Caco-2 (cell line): ENCODE measurements at regions of chr2 and their contacts with region 1.

Region 1: DNA sequence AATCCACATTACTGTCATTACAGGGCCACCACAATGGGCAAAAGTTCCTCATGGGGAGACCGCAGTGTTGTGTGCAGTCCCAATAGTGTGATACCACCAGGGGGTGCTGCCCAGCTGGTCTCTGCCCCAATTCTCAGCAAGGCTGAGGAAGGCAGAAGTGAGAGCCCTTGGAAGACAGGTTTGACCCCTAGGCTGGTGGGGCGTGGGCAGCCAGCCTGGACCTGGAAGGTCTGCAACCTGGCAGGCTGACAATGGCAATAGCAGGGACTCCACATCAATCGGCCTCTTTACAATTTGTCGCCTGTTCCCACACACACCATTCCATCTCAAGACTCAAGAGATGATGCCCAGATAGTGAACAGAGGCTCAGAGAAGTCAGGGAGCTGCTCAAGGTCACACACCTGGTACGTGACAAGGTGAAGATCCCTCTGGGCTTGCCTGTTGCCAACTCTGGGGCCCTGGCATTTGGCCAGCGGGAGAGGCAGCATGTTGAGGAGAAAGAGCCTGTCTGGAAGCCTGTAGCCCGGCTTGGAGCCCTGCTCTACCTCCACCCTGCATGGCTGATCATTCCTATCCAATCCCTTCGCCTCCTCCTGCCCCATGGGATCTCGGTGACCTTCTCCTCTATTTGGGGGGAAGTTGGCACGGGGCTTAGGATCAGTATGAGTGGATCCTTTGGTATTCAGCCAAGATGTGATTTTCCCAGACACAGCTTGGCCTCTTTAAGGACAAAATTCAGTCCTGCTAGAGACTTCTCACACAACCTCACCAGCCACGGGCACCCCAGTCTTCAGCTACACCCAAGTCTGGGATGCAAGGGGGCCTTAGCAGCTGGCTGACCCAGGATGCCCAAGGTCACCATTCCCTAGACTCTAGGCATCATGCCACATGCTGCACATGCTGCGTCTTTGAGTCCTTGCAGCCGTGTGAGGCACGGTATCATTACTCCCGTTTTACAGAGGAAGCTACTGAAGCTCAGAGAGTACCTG is 2.9 kb upstream of the ATOH8 start:
- DNase-seq: peak; percentile 69 to 81
- H3K4me3 ChIP-seq: no peak overlapping the region
- H3K4me3 Mint-ChIP-seq: no peak overlapping the region
- H3K27ac Mint-ChIP-seq: no peak overlapping the region
- H3K4me1 ChIP-seq: peaks cover 11% of the 10 kb centered on the region
- H3K4me1 Mint-ChIP-seq: peaks cover 9% of the 10 kb centered on the region
- H3K27me3 ChIP-seq: peaks cover 6% of the 10 kb centered on the region
- H3K27me3 Mint-ChIP-seq: peaks cover 23% of the 10 kb centered on the region
- CTCF ChIP-seq: peak; percentile 85 to 91

Region 2: DNA sequence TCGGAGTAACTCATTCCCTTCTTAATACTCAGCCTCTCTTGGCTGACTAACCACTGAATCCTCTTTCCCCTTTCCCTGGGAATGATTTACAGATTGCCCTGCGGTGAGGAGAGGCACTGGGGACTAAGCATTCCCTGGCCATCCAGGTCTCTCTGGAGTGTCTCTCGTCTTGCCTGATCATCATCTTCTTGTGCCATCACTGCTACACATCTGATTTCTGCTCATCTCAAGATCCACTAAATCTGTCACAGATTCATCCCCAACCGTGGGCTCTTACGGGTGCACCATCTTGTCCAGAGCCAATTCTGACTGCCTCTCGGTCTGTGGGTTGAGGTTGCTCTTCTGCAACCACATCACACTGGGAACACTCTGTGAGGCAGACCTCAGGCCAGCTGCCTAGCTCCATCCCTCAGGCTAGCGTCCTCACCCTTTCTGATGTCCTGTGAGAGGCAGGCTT is 94.9 kb before region 1 on chr2:
- CTCF ChIA-PET with region 1: no interaction called
- POLR2A ChIA-PET with region 1: no interaction called
- intact Hi-C with region 1: no loop called
- DNase-seq: no peak
- H3K4me3 ChIP-seq: no peak overlapping the region
- H3K4me3 Mint-ChIP-seq: no peak overlapping the region
- H3K27ac Mint-ChIP-seq: no peak overlapping the region
- H3K4me1 ChIP-seq: no peaks in the 10 kb centered on the region
- H3K4me1 Mint-ChIP-seq: no peaks in the 10 kb centered on the region
- H3K27me3 ChIP-seq: no peaks in the 10 kb centered on the region
- H3K27me3 Mint-ChIP-seq: no peaks in the 10 kb centered on the region
- CTCF ChIP-seq: no peak

Region 3: DNA sequence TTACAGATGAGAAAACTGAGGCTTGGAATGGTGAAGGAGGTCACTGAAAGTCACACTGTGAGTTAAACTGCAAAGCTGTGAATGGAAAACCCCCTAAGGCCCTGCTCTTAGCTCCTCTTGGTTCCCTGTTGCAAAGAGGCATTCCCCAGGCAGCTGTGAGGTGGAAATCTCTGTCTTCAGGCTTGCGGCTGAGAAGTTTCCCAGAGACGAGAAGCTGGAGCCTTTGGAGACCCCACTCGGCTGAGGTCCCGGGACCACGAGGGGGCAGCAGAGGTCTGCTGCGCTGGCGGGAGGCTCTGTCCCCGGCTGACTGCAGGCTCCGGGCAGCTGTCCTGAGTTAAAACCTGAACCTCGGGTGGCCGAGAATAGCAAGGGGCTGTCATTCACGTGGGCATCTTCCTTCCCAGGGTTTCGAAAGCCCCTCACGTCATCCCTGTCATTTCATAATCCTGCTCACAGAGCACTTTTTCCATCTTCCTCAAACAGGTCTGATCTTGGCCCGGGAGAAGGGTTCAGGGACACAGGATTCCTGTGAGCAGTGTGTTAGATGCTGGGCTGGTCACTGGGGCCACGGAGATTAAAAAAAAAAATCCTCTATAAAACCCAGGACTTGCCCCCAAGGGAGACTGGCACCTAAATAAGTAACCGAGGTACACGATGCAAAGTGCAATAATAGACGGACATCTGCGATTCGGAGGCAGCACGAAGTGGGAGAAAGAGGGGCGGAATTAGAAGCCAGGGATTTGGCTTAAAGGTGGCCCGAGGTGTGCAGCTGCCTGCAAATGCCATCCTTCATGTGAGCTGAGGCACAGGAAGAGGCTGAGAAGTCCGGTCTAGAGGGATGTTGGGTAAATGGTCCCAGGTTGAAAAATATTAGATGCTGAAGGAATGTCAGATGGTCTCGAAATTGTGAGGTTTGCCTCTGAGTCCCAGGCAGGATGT is 21.7 kb before region 1 on chr2:
- CTCF ChIA-PET with region 1: interaction called, 11 read pairs
- POLR2A ChIA-PET with region 1: no interaction called
- intact Hi-C with region 1: loop called (anchors 1 kb)
- DNase-seq: peak; percentile 78 to 92
- H3K4me3 ChIP-seq: no peak overlapping the region
- H3K4me3 Mint-ChIP-seq: no peak overlapping the region
- H3K27ac Mint-ChIP-seq: no peak overlapping the region
- H3K4me1 ChIP-seq: no peaks in the 10 kb centered on the region
- H3K4me1 Mint-ChIP-seq: no peaks in the 10 kb centered on the region
- H3K27me3 ChIP-seq: no peaks in the 10 kb centered on the region
- H3K27me3 Mint-ChIP-seq: peaks cover 6% of the 10 kb centered on the region
- CTCF ChIP-seq: peak; percentile 97 to 99

Region 4: DNA sequence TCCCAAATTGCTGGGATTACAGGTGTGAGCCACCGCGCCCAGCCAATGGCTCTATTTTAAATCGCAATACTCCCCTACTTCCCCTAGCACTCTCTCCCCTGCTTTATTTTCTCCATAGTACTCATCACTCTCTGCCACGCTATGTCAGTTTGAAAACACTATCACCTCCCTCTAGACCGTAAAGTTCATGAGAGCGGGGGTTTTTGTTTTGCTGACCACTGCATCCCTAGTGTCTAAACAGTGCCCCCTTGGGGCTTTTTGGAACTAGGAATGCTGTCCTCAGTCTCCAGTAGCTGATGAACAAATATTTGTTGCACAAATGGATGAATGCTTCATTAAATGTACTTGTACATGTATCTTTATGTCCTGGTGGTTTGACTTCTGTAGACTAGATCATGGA is 47.0 kb after region 1 on chr2:
- CTCF ChIA-PET with region 1: interaction called, 4 read pairs
- POLR2A ChIA-PET with region 1: no interaction called
- intact Hi-C with region 1: loop called (anchors 5 kb)
- DNase-seq: peak; percentile 21 to 29
- H3K4me3 ChIP-seq: no peak overlapping the region
- H3K4me3 Mint-ChIP-seq: no peak overlapping the region
- H3K27ac Mint-ChIP-seq: no peak overlapping the region
- H3K4me1 ChIP-seq: no peaks in the 10 kb centered on the region
- H3K4me1 Mint-ChIP-seq: peaks cover 9% of the 10 kb centered on the region
- H3K27me3 ChIP-seq: no peaks in the 10 kb centered on the region; the same call in none of the 2 replicates
- H3K27me3 Mint-ChIP-seq: peaks cover 4% of the 10 kb centered on the region
- CTCF ChIP-seq: peak; percentile 30 to 33

Region 5: DNA sequence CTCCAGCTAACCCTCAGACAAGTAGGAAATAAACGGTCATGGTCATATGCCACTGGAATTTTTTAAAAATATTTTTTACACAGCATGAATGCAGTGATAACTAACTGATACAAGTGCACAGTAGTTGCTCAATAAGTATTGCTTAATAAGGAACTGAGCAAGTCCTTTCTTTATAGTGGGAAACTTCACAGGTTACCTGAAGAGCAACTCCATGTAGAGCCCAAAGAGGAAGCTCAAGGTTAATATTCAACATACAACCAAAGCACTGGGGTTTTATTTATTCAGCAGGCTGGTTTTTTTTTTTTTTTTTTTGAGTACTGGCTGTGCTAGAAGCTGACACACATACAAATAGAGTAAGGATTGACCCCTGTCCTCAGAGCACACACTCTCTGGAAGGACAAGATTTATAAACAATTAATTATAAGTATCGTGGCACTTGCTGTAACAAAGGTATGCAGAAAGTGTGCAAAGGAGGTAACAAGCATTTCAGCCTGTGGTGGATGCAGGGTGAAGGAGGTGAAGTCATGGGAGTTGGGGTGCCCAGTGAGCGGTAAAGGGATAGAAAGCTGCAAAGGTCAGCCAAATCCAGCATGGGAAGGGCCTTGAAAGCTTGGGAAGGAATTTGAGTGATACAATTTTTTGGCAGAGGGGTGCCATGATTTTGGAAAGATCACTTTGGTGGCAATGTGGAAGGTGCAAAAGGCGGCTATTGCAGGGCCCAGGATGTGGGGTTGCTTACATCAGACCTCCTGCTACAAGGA is 55.7 kb after region 1 on chr2:
- CTCF ChIA-PET with region 1: interaction called, 5 read pairs
- POLR2A ChIA-PET with region 1: no interaction called
- intact Hi-C with region 1: loop called (anchors 2 kb)
- DNase-seq: no peak
- H3K4me3 ChIP-seq: no peak overlapping the region
- H3K4me3 Mint-ChIP-seq: no peak overlapping the region
- H3K27ac Mint-ChIP-seq: no peak overlapping the region
- H3K4me1 ChIP-seq: no peaks in the 10 kb centered on the region
- H3K4me1 Mint-ChIP-seq: no peaks in the 10 kb centered on the region
- H3K27me3 ChIP-seq: no peaks in the 10 kb centered on the region; the same call in 1 of the 2 replicates
- H3K27me3 Mint-ChIP-seq: no peaks in the 10 kb centered on the region
- CTCF ChIP-seq: no peak

Region 6: DNA sequence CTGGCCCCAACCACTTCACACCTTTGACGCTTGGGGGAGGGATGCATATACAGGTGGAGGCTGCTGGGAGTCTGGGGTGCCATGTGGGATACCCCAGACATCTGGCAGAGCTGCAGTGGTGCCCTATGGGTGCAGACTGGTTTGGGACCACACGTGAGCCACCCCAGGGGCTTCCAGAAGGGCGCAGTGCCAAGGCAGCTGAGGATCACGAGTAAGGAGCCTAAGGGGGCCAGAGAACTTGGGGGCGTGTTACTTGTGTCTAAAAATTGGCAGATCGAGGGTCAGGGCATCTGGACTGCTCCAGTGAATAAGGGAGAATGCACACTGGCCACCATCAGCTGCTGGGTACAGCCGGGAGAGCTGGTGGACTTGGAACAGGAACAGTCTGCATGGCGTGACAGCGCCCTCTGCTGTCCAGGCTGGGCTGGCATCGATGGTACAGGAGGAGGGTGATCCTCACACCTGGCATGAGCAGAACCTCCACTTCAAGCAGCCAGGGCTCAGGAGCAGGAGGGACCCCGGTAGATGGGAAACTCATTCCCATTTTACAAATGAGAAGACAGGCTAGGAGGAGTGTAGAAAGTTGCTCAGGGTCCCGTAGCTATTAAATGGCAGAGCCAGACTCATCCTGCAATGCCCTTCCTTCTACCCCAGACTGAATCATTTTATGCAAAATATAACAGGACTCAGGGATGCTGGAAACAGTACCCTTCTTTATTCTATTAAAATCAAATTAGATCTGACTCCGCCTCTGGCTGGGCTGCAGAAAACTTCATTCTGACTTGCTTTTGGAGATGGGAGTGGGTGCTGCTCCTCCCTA is 63.3 kb after region 1 on chr2:
- CTCF ChIA-PET with region 1: interaction called, 23 read pairs
- POLR2A ChIA-PET with region 1: no interaction called
- intact Hi-C with region 1: loop called (anchors 1 kb)
- DNase-seq: peak; percentile 84 to 91
- H3K4me3 ChIP-seq: no peak overlapping the region
- H3K4me3 Mint-ChIP-seq: no peak overlapping the region
- H3K27ac Mint-ChIP-seq: no peak overlapping the region
- H3K4me1 ChIP-seq: no peaks in the 10 kb centered on the region
- H3K4me1 Mint-ChIP-seq: peaks cover 9% of the 10 kb centered on the region
- H3K27me3 ChIP-seq: no peaks in the 10 kb centered on the region; the same call in 1 of the 2 replicates
- H3K27me3 Mint-ChIP-seq: peaks cover 2% of the 10 kb centered on the region
- CTCF ChIP-seq: peak; percentile 97 to 98